Heart right ventricle (tissue), 16 donors: ENCODE measurements at regions of chr7 and their contacts with region 1.

Region 1: GRCh38 chr7:129825496-129826267 is 127.1 kb downstream of the UBE2H start:
- DNase-seq: peak; percentile 85 to 92
- ATAC-seq: peak; percentile 82 to 89 (median 86)
- H3K4me3 ChIP-seq: peak overlapping the region; percentile 47 to 90 (median 67)
- H3K27ac ChIP-seq: peak overlapping the region in 6 of 10 donors; percentile 41 to 76 (median 58)
- H3K4me1 ChIP-seq: peaks cover 9 to 35% (median 30%) of the 10 kb centered on the region in 9 donors
- H3K27me3 ChIP-seq: no peaks in the 10 kb centered on the region
- CTCF ChIP-seq: peak; percentile 92 to 99 (median 96)

Region 2: GRCh38 chr7:129367700-129368388 is 457.8 kb before region 1 on chr7:
- intact Hi-C with region 1: loop called in 4 of 10 experiments (anchors 10 kb)
- DNase-seq: peak; percentile 63
- ATAC-seq: peak; percentile 79 to 92 (median 87)
- H3K4me3 ChIP-seq: peak overlapping the region in 4 of 10 donors; percentile 3 to 29 (median 11)
- H3K27ac ChIP-seq: no peak overlapping the region
- H3K4me1 ChIP-seq: peaks cover 0 to 18% (median 11%) of the 10 kb centered on the region in 9 donors
- H3K27me3 ChIP-seq: no peaks in the 10 kb centered on the region
- CTCF ChIP-seq: peak; percentile 71 to 96 (median 89)

Region 3: DNA sequence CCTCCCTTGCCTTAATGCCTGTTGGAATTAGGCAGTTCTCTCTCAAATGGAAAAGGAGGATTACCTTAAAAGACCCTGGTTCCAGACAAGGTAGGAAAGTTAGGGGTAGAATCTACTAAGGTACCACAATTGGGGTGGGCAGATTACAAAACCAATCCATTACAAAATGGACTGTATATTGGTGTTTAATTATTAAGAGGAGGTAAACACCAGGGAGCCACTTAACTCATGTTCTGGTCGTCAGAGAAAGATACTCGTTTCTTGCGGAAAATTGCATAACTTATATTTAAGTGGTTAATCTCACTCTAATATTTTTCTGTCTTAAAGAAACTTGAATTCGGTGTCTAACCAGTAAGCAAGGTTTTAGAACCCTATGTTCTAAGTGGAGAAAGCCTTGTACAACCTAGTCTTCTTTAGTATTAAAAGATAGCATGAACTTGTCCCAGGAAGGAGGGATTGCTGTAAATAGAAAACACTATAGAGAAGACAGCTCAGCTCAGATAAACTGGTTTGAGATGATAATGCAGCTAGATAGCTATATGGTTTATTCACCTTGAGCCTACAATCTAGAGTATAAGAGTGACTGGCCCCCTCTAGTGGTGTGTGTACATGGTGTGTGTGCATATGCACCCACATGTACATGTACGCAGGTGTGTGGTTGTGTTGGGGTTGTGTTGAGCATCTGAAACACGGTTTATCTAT is 449.5 kb before region 1 on chr7:
- intact Hi-C with region 1: loop called in 1 of 10 experiments (anchors 10 kb)
- DNase-seq: peak in 1 of 2 donors; percentile 10
- ATAC-seq: peak in 1 of 8 donors; percentile 59
- H3K4me3 ChIP-seq: no peak overlapping the region
- H3K27ac ChIP-seq: no peak overlapping the region
- H3K4me1 ChIP-seq: peaks cover 0 to 15% (median 0%) of the 10 kb centered on the region in 9 donors
- H3K27me3 ChIP-seq: no peaks in the 10 kb centered on the region
- CTCF ChIP-seq: peak; percentile 11 to 64 (median 50)

Region 4: DNA sequence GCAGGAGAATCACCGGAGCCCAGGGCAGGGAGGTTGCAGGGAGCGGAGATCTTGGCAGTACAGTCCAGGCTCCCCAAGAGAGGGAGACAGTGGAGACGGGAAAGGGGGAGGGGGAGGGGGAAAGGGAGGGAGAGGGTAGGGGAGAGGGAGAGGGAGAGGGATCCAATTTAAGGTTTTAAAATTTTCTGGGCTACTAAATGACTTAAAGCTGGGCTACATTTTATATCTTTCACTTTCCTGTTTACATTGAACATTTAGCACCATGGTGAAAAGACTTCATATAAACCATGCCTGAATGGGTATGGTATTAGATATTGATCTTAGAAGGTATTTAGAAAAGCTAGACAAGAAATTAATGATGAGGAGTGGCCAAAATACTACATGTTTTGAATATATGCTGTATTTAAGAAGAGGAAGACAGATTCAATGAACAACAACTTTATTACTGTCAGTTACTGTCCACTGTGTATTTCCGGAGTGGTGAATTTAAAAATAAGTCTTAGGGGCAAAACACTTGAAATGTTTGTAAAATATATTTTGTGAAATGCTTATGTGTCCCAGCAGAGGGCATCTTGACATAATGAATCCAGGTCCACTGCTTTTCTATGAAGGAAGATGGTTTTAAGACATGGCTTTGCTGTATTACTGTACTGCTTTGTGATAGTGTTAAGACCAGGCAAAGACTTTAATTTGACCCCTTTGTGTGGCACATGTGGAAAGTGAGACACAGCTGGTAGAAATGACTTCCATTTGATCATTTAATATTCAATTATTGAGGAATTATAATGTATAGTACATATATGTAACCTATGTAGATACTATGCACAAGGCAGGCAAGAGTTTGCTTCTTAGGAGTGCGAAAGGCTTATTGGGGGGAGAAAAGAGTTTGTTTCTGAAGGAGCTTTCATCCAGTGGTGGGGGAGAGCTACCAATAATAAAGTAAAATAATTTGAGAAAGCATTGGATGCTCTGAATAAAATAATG is 161.4 kb before region 1 on chr7:
- intact Hi-C with region 1: loop called (anchors 2 to 10 kb)
- DNase-seq: no peak
- ATAC-seq: peak in 3 of 8 donors; percentile 24 to 33 (median 31)
- H3K4me3 ChIP-seq: no peak overlapping the region
- H3K27ac ChIP-seq: no peak overlapping the region
- H3K4me1 ChIP-seq: peaks cover 0 to 9% (median 0%) of the 10 kb centered on the region in 9 donors
- H3K27me3 ChIP-seq: no peaks in the 10 kb centered on the region
- CTCF ChIP-seq: peak in 8 of 9 donors; percentile 13 to 64 (median 52)

Region 5: GRCh38 chr7:129952653-129953560 is 127.2 kb after region 1 on chr7 and contains the start of gene UBE2H:
- intact Hi-C with region 1: loop called in 8 of 10 experiments (anchors 2 to 5 kb)
- DNase-seq: peak; percentile 92 to 94
- ATAC-seq: peak; percentile 83 to 93 (median 92)
- H3K4me3 ChIP-seq: peak within 1 kb of the TSS; percentile 80 to 99 (median 89)
- H3K27ac ChIP-seq: peak within 1 kb of the TSS; percentile 90 to 99 (median 96)
- H3K4me1 ChIP-seq: peaks cover 0 to 38% (median 24%) of the 10 kb centered on the region in 9 donors
- H3K27me3 ChIP-seq: no peaks in the 10 kb centered on the region
- CTCF ChIP-seq: no peak
- total RNA-seq, gene UBE2H: 73.5 to 222 (median 170) TPM